Activated CD4-positive, alpha-beta T cell treated with anti-CD3 and anti-CD28 coated beads for 36 hours (primary cell): ENCODE measurements at regions of chr10 and their contacts with region 1.

Region 1: GRCh38 chr10:101095542-101096213 is 33.9 kb downstream of the KAZALD1 start:
- DNase-seq: peak; percentile 86
- ATAC-seq: peak; percentile 100
- H3K4me3 Mint-ChIP-seq: no peak overlapping the region
- H3K27ac Mint-ChIP-seq: no peak overlapping the region
- H3K4me1 Mint-ChIP-seq: no peaks in the 10 kb centered on the region
- H3K27me3 Mint-ChIP-seq: peaks cover 27% of the 10 kb centered on the region

Region 2: GRCh38 chr10:100551196-100551595 is 544.5 kb before region 1 on chr10:
- CTCF ChIA-PET with region 1: no interaction called
- POLR2A ChIA-PET with region 1: no interaction called
- intact Hi-C with region 1: no loop called
- DNase-seq: no peak
- ATAC-seq: no peak
- H3K4me3 Mint-ChIP-seq: no peak overlapping the region
- H3K27ac Mint-ChIP-seq: no peak overlapping the region
- H3K4me1 Mint-ChIP-seq: no peaks in the 10 kb centered on the region
- H3K27me3 Mint-ChIP-seq: no peaks in the 10 kb centered on the region

Region 3: GRCh38 chr10:100872034-100872791 is 223.5 kb before region 1 on chr10:
- CTCF ChIA-PET with region 1: no interaction called
- POLR2A ChIA-PET with region 1: no interaction called
- intact Hi-C with region 1: no loop called
- DNase-seq: peak; percentile 89
- ATAC-seq: peak; percentile 97
- H3K4me3 Mint-ChIP-seq: no peak overlapping the region
- H3K27ac Mint-ChIP-seq: no peak overlapping the region
- H3K4me1 Mint-ChIP-seq: no peaks in the 10 kb centered on the region
- H3K27me3 Mint-ChIP-seq: peaks cover 9% of the 10 kb centered on the region

Region 4: GRCh38 chr10:101067356-101068083 is 28.2 kb before region 1 on chr10:
- CTCF ChIA-PET with region 1: interaction called, 10 read pairs
- POLR2A ChIA-PET with region 1: no interaction called
- intact Hi-C with region 1: no loop called
- DNase-seq: peak; percentile 87
- ATAC-seq: peak; percentile 74
- H3K4me3 Mint-ChIP-seq: peak overlapping the region; percentile 72
- H3K27ac Mint-ChIP-seq: peak overlapping the region; percentile 25
- H3K4me1 Mint-ChIP-seq: peaks cover 28% of the 10 kb centered on the region
- H3K27me3 Mint-ChIP-seq: peaks cover 30% of the 10 kb centered on the region

Region 5: GRCh38 chr10:101114646-101115045 is 19.0 kb after region 1 on chr10:
- CTCF ChIA-PET with region 1: interaction called, 11 read pairs
- POLR2A ChIA-PET with region 1: no interaction called
- intact Hi-C with region 1: no loop called
- DNase-seq: no peak
- ATAC-seq: no peak
- H3K4me3 Mint-ChIP-seq: no peak overlapping the region
- H3K27ac Mint-ChIP-seq: no peak overlapping the region
- H3K4me1 Mint-ChIP-seq: no peaks in the 10 kb centered on the region
- H3K27me3 Mint-ChIP-seq: peaks cover 26% of the 10 kb centered on the region

Region 6: DNA sequence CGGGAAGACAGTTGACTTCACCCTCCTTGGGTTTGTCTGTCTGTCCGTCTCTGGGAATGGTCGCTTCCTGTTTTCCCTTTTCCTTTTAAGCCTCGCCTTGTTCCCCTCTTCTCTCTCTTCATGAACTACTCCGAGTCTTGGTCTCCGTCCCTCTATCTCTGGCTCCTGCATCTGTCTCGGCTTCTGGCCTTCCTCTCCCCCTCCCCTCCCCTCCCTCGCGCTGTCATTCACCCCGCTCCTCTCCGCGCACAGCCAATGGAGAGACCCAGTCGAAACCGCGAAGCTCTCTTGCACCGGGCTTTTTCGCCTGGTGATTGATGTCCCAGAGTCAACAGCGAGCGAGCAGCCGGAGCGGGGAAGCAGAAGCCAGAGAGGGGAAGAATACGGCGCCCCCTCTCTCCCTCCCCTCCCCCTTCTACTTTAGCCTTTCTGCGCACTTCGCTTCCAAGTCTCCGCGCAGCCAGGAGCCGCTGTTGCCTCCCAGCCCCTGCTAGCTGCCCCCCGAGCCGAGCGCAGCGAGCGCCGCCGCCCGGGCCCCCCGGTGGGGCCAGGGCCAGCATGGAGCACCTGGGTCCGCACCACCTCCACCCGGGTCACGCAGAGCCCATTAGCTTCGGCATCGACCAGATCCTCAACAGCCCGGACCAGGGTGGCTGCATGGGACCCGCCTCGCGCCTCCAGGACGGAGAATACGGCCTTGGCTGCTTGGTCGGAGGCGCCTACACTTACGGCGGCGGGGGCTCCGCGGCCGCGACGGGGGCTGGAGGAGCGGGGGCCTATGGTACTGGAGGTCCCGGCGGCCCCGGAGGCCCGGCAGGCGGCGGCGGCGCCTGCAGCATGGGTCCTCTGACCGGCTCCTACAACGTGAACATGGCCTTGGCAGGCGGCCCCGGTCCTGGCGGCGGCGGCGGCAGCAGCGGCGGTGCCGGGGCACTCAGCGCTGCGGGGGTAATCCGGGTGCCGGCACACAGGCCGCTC is 35.6 kb after region 1 on chr10 and contains the start of gene TLX1:
- CTCF ChIA-PET with region 1: interaction called, 10 read pairs
- POLR2A ChIA-PET with region 1: interaction called, 3 read pairs
- intact Hi-C with region 1: no loop called
- DNase-seq: peak; percentile 41
- ATAC-seq: no peak
- H3K4me3 Mint-ChIP-seq: peak within 1 kb of the TSS; percentile 21
- H3K27ac Mint-ChIP-seq: no peak within 1 kb of the TSS
- H3K4me1 Mint-ChIP-seq: peaks cover 24% of the 10 kb centered on the region
- H3K27me3 Mint-ChIP-seq: peaks cover 76% of the 10 kb centered on the region
- total RNA-seq, gene TLX1: not detected

Region 7: DNA sequence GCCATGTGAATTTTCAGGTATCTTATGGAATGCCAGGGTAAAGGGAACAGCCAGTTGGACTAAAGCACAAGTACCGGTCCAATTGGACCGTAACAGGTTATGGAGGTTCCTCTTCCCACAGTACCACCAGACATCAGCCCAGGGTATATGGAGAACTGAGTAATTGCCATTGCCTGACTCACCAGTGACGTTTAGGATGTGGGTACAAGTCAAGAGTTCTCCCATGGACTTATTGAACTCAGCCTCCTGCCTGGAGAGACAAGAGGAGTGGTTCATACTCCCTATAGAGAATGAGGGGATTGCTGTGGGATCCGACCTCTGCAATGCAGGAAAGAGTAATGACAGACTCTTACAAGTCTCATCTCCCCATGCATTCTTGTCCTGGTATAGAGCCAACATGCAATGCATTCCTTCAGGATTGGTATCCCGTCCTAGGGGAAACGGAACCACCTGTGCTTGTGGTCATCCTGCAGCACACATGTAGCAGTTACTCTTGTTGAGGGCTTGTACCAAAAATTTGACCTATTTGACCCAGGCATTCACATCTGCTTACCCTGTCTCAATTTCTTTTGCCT is 1099.7 kb after region 1 on chr10:
- CTCF ChIA-PET with region 1: no interaction called
- POLR2A ChIA-PET with region 1: no interaction called
- intact Hi-C with region 1: no loop called
- DNase-seq: no peak
- ATAC-seq: no peak
- H3K4me3 Mint-ChIP-seq: no peak overlapping the region
- H3K27ac Mint-ChIP-seq: no peak overlapping the region
- H3K4me1 Mint-ChIP-seq: peaks cover 8% of the 10 kb centered on the region
- H3K27me3 Mint-ChIP-seq: no peaks in the 10 kb centered on the region